ENCODE measurements at regions of chr6 and their contacts with region 1.

Region 1: GRCh38 chr6:143450453-143451371 is at the starts of genes ADAT2 and PEX3:
- DNase-seq: peak; percentile 90
- ATAC-seq: peak; percentile 91
- H3K4me3 Mint-ChIP-seq: peak within 1 kb of the TSS; percentile 98
- H3K27ac Mint-ChIP-seq: peak within 1 kb of the TSS; percentile 96
- H3K4me1 Mint-ChIP-seq: peaks cover 39% of the 10 kb centered on the region
- H3K27me3 Mint-ChIP-seq: no peaks in the 10 kb centered on the region
- CTCF ChIP-seq: no peak
- total RNA-seq, gene ADAT2: 22.4 and 30.2 TPM in 2 replicates
- total RNA-seq, gene PEX3: 21.7 and 26.5 TPM in 2 replicates

Region 2: DNA sequence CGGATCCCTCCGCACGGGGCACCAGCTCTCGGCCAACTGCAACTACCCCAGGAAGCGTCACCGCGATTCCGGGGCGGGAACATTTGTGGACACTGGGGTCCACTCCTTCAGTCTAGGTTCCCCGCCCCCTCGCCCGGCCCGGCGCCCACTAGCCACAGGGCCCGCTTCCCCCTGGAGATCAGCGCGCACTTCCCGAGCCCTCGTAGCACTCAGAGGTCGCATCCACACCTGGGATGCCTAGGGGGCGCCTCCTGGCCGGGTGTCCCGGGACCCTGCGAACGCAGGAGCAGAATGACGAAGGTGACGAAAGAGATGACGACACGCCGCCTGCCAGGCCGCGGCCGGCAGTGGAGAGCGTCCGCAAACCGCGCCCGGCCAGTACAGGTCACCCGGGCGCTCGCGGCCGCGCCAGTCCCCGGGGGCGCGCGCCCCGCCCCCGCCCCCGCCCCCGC is 390.3 kb before region 1 on chr6:
- CTCF ChIA-PET with region 1: no interaction called
- POLR2A ChIA-PET with region 1: no interaction called
- intact Hi-C with region 1: loop called (anchors 5 kb)
- DNase-seq: peak; percentile 74
- ATAC-seq: peak; percentile 63
- H3K4me3 Mint-ChIP-seq: peak overlapping the region; percentile 93
- H3K27ac Mint-ChIP-seq: peak overlapping the region; percentile 86
- H3K4me1 Mint-ChIP-seq: peaks cover 20% of the 10 kb centered on the region
- H3K27me3 Mint-ChIP-seq: no peaks in the 10 kb centered on the region
- CTCF ChIP-seq: no peak

Region 3: GRCh38 chr6:143510991-143511891 is 60.5 kb after region 1 on chr6 and contains the start of gene FUCA2:
- CTCF ChIA-PET with region 1: no interaction called
- POLR2A ChIA-PET with region 1: interaction called, 13 read pairs
- intact Hi-C with region 1: loop called (anchors 1 kb)
- DNase-seq: peak; percentile 47
- ATAC-seq: peak; percentile 69
- H3K4me3 Mint-ChIP-seq: peak within 1 kb of the TSS; percentile 90
- H3K27ac Mint-ChIP-seq: peak within 1 kb of the TSS; percentile 74
- H3K4me1 Mint-ChIP-seq: peaks cover 28% of the 10 kb centered on the region
- H3K27me3 Mint-ChIP-seq: no peaks in the 10 kb centered on the region
- CTCF ChIP-seq: no peak
- total RNA-seq, gene FUCA2: 8.7 and 9.9 TPM in 2 replicates

Region 4: GRCh38 chr6:143569040-143569439 is 118.3 kb after region 1 on chr6:
- CTCF ChIA-PET with region 1: no interaction called
- POLR2A ChIA-PET with region 1: interaction called, 6 read pairs
- intact Hi-C with region 1: loop called (anchors 1 kb)
- DNase-seq: no peak
- ATAC-seq: no peak
- H3K4me3 Mint-ChIP-seq: no peak overlapping the region
- H3K27ac Mint-ChIP-seq: no peak overlapping the region
- H3K4me1 Mint-ChIP-seq: peaks cover 14% of the 10 kb centered on the region
- H3K27me3 Mint-ChIP-seq: no peaks in the 10 kb centered on the region
- CTCF ChIP-seq: no peak

Region 5: GRCh38 chr6:143982968-143983367 is 532.3 kb after region 1 on chr6:
- CTCF ChIA-PET with region 1: no interaction called
- POLR2A ChIA-PET with region 1: no interaction called
- intact Hi-C with region 1: no loop called
- DNase-seq: no peak
- ATAC-seq: no peak
- H3K4me3 Mint-ChIP-seq: no peak overlapping the region
- H3K27ac Mint-ChIP-seq: no peak overlapping the region
- H3K4me1 Mint-ChIP-seq: no peaks in the 10 kb centered on the region
- H3K27me3 Mint-ChIP-seq: no peaks in the 10 kb centered on the region
- CTCF ChIP-seq: no peak

Region 6: DNA sequence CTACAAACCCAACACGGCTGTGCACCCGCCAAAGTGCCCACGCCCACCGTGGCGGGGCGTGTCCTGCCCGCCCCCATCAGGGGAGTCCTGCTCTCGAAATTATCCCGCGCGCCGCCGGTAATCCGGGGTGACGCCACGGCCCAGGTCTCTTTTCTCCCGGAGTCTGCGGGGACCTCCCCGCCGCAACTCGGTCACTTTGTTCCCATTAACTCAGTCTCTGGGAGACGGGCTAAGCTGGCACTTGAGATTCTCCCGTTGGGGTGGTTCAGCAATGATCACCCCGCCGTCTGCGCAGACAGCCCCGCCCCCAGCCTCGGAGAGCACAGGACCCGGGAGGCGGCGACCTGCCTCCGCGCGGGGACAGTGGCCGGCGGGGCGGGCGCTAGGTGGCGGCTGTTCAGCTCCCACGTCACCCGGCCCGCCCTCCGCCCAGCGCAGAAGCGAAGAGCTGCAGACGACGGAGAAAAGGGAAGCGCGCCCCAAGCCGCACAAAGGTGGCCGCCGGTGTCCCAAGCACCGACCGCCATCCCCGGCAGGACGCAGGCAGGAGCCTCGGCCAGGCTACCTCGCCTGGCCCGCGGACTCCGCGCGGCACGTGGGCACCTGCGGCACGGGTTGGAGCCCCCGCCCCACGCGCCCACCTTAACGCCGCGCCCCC is 613.2 kb after region 1 on chr6:
- CTCF ChIA-PET with region 1: no interaction called
- POLR2A ChIA-PET with region 1: interaction called, 7 read pairs
- intact Hi-C with region 1: loop called (anchors 2 kb)
- DNase-seq: peak; percentile 91
- ATAC-seq: peak; percentile 93
- H3K4me3 Mint-ChIP-seq: peak overlapping the region; percentile 94
- H3K27ac Mint-ChIP-seq: peak overlapping the region; percentile 89
- H3K4me1 Mint-ChIP-seq: peaks cover 36% of the 10 kb centered on the region
- H3K27me3 Mint-ChIP-seq: no peaks in the 10 kb centered on the region
- CTCF ChIP-seq: no peak